SK-N-SH (cell line): ENCODE measurements at regions of chr11 and their contacts with region 1.

Region 1: DNA sequence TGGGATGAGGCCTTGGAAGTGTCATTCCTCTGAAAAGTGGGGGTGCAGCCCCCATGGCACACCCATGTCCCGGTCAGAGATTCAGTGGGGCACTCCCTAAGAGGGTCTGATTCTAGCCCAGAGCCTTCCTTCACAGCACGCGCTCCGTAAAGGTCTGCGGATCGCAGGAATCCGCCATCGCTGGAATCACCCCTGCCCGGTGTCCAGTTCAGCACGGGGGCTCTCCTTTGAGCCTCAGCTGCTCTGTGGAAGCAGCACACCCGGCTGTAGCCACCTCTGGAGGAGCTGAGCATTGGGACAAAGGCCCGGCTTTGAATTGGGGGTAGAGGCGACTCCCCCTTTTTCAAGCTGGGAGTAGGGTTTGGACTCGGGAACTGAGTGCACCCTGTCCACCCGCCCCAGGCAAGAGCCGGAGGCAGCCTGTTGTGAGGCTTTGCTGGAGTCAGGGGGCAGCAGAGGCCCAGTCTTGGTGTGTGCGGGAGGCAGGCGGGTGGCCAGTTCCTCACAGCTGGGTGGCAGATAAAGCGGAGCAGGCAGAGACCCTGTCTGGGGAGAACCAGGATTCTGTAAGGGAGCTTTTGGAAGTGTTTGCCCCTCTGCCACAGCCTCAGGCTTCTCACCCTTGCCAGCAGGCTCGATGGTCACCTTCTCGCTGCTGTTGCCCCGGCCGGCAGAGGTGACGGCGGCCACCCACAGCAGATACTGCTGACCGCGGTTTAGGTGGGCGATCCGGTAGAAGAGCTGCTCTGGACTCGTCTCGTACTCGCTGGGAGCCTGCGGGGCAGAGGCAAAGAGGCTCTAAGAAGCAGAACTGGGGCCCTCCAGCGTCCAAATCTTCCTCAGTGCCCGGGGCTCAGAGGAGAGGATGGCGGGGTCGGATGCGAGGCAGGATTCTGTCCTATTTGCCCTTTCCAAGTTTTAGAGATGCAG is 115.9 kb downstream of the CEP164 start:
- DNase-seq: peak; percentile 92
- H3K4me3 ChIP-seq: peak overlapping the region; percentile 8 to 9; a peak in 2 of 4 replicates
- H3K27ac ChIP-seq: peak overlapping the region in 1 of 2 experiments; percentile 99; a peak in 2 of 4 replicates
- H3K4me1 ChIP-seq: peaks cover 0 to 29% of the 10 kb centered on the region in 2 experiments; a peak in 2 of 4 replicates
- H3K27me3 ChIP-seq: peaks cover 22% of the 10 kb centered on the region; the same call in 1 of the 2 replicates
- CTCF ChIP-seq: peak; percentile 65
- EP300 ChIP-seq: peak in 1 of 2 experiments; percentile 31; a peak in 1 of 4 replicates
- RAD21 ChIP-seq: peak; percentile 96

Region 2: GRCh38 chr11:117226388-117227385 is 216.8 kb before region 1 on chr11:
- CTCF ChIA-PET with region 1: no interaction called
- POLR2A ChIA-PET with region 1: no interaction called
- DNase-seq: peak; percentile 84
- H3K4me3 ChIP-seq: no peak overlapping the region; a peak in 1 of 4 replicates
- H3K27ac ChIP-seq: no peak overlapping the region
- H3K4me1 ChIP-seq: peaks cover 14 to 16% of the 10 kb centered on the region in 2 experiments; a peak in 3 of 4 replicates
- H3K27me3 ChIP-seq: no peaks in the 10 kb centered on the region
- CTCF ChIP-seq: peak; percentile 79
- EP300 ChIP-seq: no peak
- RAD21 ChIP-seq: peak; percentile 90

Region 3: GRCh38 chr11:117456027-117456720 is 12.6 kb after region 1 on chr11:
- CTCF ChIA-PET with region 1: interaction called, 18 read pairs
- POLR2A ChIA-PET with region 1: no interaction called
- DNase-seq: no peak
- H3K4me3 ChIP-seq: no peak overlapping the region
- H3K27ac ChIP-seq: peak overlapping the region in 1 of 2 experiments; percentile 90; a peak in 1 of 4 replicates
- H3K4me1 ChIP-seq: peaks cover 0 to 29% of the 10 kb centered on the region in 2 experiments; a peak in 1 of 4 replicates
- H3K27me3 ChIP-seq: no peaks in the 10 kb centered on the region
- CTCF ChIP-seq: no peak
- EP300 ChIP-seq: no peak
- RAD21 ChIP-seq: no peak

Region 4: GRCh38 chr11:117511931-117512539 is 68.5 kb after region 1 on chr11:
- CTCF ChIA-PET with region 1: interaction called, 108 read pairs
- POLR2A ChIA-PET with region 1: interaction called, 9 read pairs
- DNase-seq: peak; percentile 54
- H3K4me3 ChIP-seq: no peak overlapping the region
- H3K27ac ChIP-seq: peak overlapping the region in 1 of 2 experiments; percentile 85; a peak in 2 of 4 replicates
- H3K4me1 ChIP-seq: peaks cover 0 to 56% of the 10 kb centered on the region in 2 experiments; a peak in 1 of 4 replicates
- H3K27me3 ChIP-seq: peaks cover 6% of the 10 kb centered on the region; the same call in 1 of the 2 replicates
- CTCF ChIP-seq: no peak
- EP300 ChIP-seq: no peak
- RAD21 ChIP-seq: no peak

Region 5: DNA sequence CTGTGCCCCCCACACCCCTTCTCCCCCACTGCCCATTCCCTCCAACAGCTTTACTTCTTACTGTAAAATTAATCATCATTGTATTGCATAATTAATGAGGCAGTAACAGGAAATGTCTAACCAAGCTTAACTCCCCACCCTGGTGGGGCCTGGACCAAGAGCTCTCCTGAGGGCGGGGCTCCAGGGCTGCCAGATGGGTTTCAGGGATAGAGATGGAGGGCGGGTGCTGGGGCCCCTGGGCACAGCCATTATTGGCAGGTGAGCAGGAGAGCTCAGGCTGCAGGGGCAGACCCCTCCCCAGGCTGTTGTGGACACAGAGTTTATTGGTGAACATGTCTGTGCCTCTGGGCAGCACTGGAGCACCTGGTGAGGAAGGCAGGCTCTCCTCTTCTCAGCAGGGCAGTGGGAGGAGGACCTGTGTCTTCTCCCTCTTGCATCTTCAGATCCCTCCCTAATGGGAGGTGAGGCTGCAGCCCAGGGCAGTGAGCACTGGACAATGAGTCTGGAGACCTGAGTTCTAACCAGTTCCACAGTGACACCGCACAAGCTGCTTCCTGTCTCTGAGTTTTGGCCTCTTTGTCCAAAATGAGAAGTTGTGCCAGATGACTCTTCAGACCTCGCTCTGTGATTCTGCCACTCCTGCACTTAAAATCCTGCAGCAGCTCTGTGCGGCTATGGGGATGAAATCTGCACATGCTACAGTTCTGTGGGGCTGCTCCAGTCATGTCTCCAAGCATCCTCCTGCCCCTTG is 117.4 kb after region 1 on chr11:
- CTCF ChIA-PET with region 1: interaction called, 28 read pairs
- POLR2A ChIA-PET with region 1: interaction called, 10 read pairs
- DNase-seq: no peak
- H3K4me3 ChIP-seq: no peak overlapping the region
- H3K27ac ChIP-seq: no peak overlapping the region
- H3K4me1 ChIP-seq: peaks cover 0 to 19% of the 10 kb centered on the region in 2 experiments; a peak in 2 of 4 replicates
- H3K27me3 ChIP-seq: peaks cover 8% of the 10 kb centered on the region; the same call in 1 of the 2 replicates
- CTCF ChIP-seq: no peak
- EP300 ChIP-seq: no peak
- RAD21 ChIP-seq: no peak

Region 6: GRCh38 chr11:117621226-117621625 is 177.7 kb after region 1 on chr11:
- CTCF ChIA-PET with region 1: interaction called, 11 read pairs
- POLR2A ChIA-PET with region 1: no interaction called
- DNase-seq: no peak
- H3K4me3 ChIP-seq: no peak overlapping the region
- H3K27ac ChIP-seq: no peak overlapping the region
- H3K4me1 ChIP-seq: peaks cover 0 to 8% of the 10 kb centered on the region in 2 experiments; a peak in 1 of 4 replicates
- H3K27me3 ChIP-seq: 0 out of 2 replicates have a peak, but pooled peaks cover 4% of the 10 kb centered on the region
- CTCF ChIP-seq: peak; percentile 57
- EP300 ChIP-seq: no peak
- RAD21 ChIP-seq: peak; percentile 18; the same call in 1 of the 2 replicates

Region 7: DNA sequence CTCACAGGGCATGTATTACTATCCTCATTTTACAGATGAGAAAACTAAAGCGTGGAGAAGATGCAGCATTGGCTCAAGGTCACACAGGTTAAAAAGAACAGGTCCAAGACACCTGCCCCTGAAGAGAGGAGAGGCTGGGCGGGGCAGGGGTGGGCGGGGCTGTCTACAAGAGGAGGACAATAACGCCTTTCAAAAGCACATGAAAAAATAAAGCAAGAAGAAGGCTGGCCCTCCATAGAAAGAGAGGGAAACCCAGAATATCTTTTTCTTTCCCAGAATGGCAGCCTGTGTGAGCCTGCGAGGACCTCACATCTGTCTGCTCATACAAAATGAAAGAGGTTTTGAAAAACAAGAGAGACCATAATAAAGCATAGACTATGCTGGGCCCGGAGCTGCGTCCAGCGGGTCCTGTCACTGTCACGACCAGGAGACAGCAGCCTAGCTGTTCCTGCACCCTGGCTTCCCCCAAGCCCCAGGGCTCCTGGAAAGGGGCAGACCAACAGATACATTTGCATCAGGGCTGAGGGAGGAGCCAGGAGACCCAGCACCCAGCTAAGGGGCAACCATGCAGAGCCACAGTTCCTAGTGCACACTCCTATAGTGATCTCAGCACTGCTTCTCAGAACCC is 291.9 kb after region 1 on chr11:
- CTCF ChIA-PET with region 1: interaction called, 11 read pairs
- POLR2A ChIA-PET with region 1: no interaction called
- DNase-seq: no peak
- H3K4me3 ChIP-seq: no peak overlapping the region
- H3K27ac ChIP-seq: no peak overlapping the region
- H3K4me1 ChIP-seq: peaks cover 0 to 21% of the 10 kb centered on the region in 2 experiments; a peak in 1 of 4 replicates
- H3K27me3 ChIP-seq: no peaks in the 10 kb centered on the region
- CTCF ChIP-seq: no peak
- EP300 ChIP-seq: no peak
- RAD21 ChIP-seq: no peak

Region 8: DNA sequence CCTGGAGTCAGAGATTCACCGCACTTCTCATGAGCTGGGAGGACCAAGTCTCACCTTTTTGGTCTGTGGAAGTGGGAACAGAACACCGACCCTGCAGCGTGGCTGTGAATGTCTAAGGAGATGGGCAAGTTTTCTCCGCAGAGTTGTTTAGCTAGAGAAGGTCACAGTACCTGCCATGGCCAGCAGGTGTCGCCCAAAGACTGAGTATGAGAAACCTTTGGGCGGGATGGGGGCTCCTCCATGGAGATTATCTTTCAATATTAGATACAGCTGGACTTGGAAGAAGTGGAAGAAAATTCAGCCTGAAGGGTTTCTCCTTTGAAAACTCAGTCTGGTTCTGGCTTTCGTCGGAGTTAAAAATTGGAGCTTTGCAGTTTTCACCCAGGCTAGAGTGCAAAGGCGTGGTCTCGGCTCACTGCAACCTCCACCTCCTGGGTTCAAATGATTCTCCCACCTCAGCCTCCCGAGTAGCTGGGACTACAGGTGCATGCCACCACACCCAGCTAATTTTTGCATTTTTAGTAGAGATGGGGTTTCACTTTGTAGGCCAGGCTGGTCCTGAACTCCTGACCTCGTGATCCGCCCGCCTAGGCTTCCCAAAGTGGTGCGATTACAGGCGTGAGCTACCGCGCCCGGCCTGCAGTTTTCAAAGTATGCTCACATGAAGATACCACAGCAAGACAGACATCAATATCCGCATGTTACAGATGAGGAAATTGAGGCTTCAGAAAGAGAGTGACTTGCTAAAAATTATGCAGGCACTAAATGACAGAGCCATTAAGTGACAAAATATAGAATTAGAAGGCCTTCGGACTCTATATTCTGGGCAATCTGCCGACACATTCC is 364.2 kb after region 1 on chr11:
- CTCF ChIA-PET with region 1: interaction called, 239 read pairs
- POLR2A ChIA-PET with region 1: interaction called, 3 read pairs
- DNase-seq: peak; percentile 79
- H3K4me3 ChIP-seq: no peak overlapping the region; a peak in 1 of 4 replicates
- H3K27ac ChIP-seq: no peak overlapping the region
- H3K4me1 ChIP-seq: peaks cover 0 to 5% of the 10 kb centered on the region in 2 experiments; a peak in 1 of 4 replicates
- H3K27me3 ChIP-seq: peaks cover 12% of the 10 kb centered on the region; the same call in 1 of the 2 replicates
- CTCF ChIP-seq: peak; percentile 92
- EP300 ChIP-seq: no peak
- RAD21 ChIP-seq: peak; percentile 84